Posterior vena cava (tissue), 2 donors: ENCODE measurements at regions of chr14 and their contacts with region 1.

Region 1: DNA sequence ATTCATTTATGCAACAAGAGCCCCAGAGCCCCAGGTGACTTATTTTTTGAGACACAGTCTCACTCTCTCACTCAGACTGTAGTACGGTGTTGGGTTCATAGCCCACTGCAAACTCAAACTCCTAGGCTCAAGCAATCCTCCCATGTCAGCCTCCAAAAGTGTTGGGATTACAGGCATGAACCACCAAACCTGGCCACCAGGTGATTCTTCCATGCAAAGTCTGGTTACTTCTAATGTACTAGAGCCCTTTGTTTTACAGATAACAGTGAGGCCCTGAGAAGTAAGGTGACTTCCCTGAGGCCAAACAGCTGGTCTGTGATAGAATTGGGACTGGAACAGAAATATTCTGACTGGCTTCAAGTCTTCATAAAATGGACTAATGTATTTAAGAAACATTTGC is 10.0 kb upstream of the KCNK10 start:
- DNase-seq: no peak

Region 2: DNA sequence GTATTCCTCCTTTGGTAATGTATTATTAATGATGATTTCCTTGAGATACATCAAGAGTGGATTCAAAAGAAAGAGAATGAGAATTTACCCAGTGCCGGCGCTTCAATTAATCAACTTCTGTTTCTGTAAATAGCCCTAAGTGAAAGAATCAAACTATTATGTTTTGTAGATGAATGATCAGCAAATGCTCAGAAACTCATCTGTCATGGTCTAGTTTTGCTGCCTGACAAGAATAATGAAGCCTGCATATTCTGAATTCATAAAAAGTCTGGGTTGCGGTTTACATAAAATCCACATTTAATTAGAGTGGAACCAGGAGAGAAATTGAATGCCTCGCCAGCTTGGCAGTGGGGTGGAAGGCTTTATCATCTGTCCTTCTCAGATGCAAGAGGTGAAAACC is 665.4 kb before region 1 on chr14:
- intact Hi-C with region 1: loop called in 1 of 2 experiments (anchors 5 kb)
- DNase-seq: no peak

Region 3: DNA sequence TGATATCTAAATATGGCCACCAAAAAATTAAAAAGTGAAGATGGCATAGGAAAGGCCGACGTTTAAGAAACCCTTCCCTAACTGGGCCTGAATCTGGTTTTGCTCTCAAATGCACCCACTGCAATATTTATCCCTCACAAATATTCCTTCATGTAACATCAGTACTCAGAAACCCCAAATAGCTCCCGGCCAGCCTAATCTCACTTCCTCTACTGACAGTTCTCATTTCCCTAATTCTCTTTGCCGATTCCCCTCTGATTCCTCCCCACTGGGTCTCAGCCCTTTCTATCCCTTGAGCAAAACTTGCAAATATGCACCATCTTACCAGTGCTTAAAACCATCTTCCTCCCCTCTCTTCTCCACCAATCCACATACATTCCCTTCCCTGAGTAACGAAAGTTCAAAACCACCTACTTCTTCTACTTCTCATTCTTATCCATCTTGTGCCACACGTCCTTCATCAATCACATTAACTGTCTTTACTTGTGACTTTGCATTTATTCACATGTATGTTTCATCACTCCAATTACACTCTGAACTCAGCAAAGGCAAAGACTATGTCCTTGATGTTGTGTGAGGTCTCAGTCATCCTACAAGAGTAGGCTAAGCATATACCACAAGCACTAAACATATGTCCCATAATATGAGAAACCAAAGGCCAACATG is 33.0 kb before region 1 on chr14:
- intact Hi-C with region 1: no loop called
- DNase-seq: no peak